Dendritic cell treated with granulocyte-macrophage colony-stimulating factor and Interleukin-4, amounts not matched to agents 40 ng/mL and 50 ng/mL, for 4 days (primary cell): ENCODE measurements at regions of chr1 and their contacts with region 1.

Region 1: DNA sequence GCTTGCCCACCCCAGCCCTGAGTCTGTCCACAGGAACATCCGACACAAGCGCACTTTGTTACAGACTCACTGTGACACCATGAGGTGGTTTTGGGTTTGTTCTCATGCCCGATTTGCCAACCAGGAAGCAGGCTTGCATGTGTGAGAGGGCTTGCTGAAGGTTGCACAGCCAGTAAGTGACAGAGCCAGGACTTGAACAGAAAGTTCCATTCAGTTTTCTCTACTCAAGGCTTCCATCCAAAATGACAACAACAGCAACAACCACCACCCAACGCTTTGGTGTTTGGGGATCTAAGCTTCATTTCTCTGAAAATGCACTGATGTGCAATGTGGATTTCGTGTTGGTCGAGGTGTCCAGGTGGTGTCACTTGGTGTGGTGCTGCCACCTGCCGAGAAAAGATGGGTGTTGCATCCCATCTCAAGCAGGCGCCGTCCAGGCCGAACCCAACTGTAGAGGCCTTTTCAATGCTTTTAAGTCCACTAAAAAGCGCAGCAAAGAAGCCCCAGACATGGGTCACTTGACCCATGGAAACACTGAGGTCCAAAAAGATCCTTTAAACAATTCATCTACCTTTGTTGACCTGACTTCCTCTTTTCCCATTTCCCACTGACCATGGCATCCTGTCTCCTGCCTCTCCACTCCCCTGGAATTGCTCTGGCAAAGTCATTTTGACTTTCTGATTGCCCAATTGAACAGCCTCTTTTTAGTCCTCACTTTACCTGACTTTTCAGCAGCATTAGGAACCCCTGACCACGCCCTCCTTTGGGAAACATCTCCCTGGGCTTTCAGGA is 12.2 kb downstream of the CITED4 start:
- H3K4me3 Mint-ChIP-seq: no peak overlapping the region
- H3K27ac Mint-ChIP-seq: no peak overlapping the region
- H3K4me1 Mint-ChIP-seq: peaks cover 18% of the 10 kb centered on the region
- H3K27me3 Mint-ChIP-seq: peaks cover 7% of the 10 kb centered on the region

Region 2: GRCh38 chr1:40592107-40592803 is 257.7 kb before region 1 on chr1:
- intact Hi-C with region 1: loop called (anchors 5 kb)
- H3K4me3 Mint-ChIP-seq: no peak overlapping the region
- H3K27ac Mint-ChIP-seq: no peak overlapping the region
- H3K4me1 Mint-ChIP-seq: peaks cover 28% of the 10 kb centered on the region
- H3K27me3 Mint-ChIP-seq: peaks cover 5% of the 10 kb centered on the region

Region 3: GRCh38 chr1:40612345-40612831 is 237.6 kb before region 1 on chr1:
- intact Hi-C with region 1: loop called (anchors 1 kb)
- H3K4me3 Mint-ChIP-seq: no peak overlapping the region
- H3K27ac Mint-ChIP-seq: no peak overlapping the region
- H3K4me1 Mint-ChIP-seq: peaks cover 18% of the 10 kb centered on the region
- H3K27me3 Mint-ChIP-seq: peaks cover 3% of the 10 kb centered on the region

Region 4: DNA sequence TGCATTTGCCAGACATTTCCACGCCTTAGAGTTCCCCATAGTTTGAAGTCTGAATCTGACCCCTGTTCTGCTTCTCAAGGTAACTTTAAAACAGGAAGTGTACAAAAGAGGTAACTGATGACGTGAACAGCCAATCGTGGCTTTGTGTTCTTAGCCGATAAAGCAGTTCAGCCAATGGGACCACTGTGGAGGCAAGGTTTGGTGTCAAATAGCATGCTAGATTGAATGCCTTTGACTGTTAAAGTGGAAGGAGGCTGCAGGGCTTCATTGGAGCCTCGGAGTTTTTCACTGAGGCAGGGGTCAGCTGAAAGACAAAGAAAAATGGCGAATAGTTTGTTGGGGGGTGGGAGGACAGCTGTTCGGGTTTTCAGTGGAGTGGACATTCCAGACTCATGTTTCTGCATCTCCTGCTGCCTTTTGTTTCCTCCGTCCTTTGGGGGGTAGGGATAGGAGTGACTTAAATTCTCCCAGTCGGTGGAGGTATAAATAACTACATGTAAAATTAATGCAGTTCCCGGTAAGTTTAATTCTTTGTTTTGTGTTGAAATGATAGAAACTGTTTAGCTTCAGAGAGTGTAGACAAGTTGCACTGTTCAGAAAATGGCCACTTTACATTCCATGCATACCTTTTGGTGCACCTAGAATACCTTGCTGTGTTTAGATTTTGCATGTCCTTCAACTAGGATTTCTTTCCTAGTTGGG is 140.7 kb before region 1 on chr1:
- intact Hi-C with region 1: no loop called
- H3K4me3 Mint-ChIP-seq: peak overlapping the region; percentile 63
- H3K27ac Mint-ChIP-seq: peak overlapping the region; percentile 68
- H3K4me1 Mint-ChIP-seq: peaks cover 56% of the 10 kb centered on the region
- H3K27me3 Mint-ChIP-seq: no peaks in the 10 kb centered on the region

Region 5: GRCh38 chr1:40774266-40774998 is 75.6 kb before region 1 on chr1:
- intact Hi-C with region 1: loop called (anchors 1 kb)
- H3K4me3 Mint-ChIP-seq: no peak overlapping the region
- H3K27ac Mint-ChIP-seq: no peak overlapping the region
- H3K4me1 Mint-ChIP-seq: peaks cover 15% of the 10 kb centered on the region
- H3K27me3 Mint-ChIP-seq: no peaks in the 10 kb centered on the region

Region 6: DNA sequence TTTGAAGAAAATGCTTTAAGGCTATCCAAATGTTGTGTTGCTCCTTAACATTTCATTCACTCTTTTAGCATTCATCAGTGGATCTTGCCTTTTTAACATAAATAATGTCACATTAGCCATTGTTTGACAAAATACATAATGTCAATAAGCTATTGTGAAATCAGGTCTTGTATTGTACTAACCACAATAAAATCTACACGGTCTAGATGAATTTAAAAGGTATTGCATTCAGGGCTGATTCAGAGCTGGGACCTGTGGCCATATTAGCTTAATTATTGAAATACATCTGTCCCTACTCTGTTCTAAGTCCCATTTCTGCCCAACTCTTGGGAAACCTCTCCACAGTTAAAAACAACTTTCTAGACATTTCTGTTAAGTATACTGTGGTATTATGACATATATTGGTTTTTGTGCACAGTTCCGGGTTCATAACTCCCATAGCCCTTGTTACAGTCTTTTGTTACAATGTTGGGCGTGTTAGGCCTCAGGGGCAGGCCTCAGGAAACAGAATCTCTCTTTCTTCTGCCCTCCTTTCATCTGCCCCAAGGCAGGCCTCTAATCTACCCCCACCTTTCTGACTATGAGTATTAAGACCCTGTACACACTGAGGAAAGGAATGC is 56.9 kb after region 1 on chr1:
- intact Hi-C with region 1: no loop called
- H3K4me3 Mint-ChIP-seq: no peak overlapping the region
- H3K27ac Mint-ChIP-seq: no peak overlapping the region
- H3K4me1 Mint-ChIP-seq: peaks cover 33% of the 10 kb centered on the region
- H3K27me3 Mint-ChIP-seq: peaks cover 18% of the 10 kb centered on the region

Region 7: GRCh38 chr1:40951943-40952743 is 102.1 kb after region 1 on chr1:
- intact Hi-C with region 1: loop called (anchors 2 kb)
- H3K4me3 Mint-ChIP-seq: peak overlapping the region; percentile 7
- H3K27ac Mint-ChIP-seq: no peak overlapping the region
- H3K4me1 Mint-ChIP-seq: peaks cover 30% of the 10 kb centered on the region
- H3K27me3 Mint-ChIP-seq: peaks cover 50% of the 10 kb centered on the region

Region 8: DNA sequence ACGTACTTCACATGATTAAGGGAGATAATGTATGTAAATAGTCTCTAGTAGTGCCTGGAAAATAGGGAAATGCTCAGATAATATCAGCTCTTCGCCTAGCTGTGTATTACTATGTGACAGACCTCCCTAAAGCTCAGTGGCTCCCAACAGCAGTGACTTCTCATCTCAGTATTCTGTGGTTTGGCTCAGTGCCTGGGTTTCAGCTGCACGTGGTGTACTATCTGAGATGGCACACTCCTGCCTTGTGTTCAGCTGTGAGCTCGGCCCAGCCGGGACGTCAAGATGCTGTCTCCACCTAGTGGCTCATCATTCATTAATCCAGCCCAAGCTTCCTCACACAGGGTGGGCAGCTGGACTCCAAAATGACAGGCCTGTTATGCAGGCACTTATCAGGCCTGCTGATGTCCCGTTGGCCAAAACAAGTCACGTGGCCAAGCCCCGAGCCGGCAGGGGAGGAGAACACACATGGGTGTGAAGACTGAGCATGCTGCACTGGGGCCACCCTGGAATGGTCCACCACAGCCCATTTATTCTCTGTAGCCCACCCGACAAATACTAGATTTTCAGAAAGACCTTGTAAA is 153.7 kb after region 1 on chr1:
- intact Hi-C with region 1: no loop called
- H3K4me3 Mint-ChIP-seq: no peak overlapping the region
- H3K27ac Mint-ChIP-seq: peak overlapping the region; percentile 58
- H3K4me1 Mint-ChIP-seq: peaks cover 21% of the 10 kb centered on the region
- H3K27me3 Mint-ChIP-seq: no peaks in the 10 kb centered on the region